Left colon (tissue), 2 donors: ENCODE measurements at regions of chr14 and their contacts with region 1.

Region 1: DNA sequence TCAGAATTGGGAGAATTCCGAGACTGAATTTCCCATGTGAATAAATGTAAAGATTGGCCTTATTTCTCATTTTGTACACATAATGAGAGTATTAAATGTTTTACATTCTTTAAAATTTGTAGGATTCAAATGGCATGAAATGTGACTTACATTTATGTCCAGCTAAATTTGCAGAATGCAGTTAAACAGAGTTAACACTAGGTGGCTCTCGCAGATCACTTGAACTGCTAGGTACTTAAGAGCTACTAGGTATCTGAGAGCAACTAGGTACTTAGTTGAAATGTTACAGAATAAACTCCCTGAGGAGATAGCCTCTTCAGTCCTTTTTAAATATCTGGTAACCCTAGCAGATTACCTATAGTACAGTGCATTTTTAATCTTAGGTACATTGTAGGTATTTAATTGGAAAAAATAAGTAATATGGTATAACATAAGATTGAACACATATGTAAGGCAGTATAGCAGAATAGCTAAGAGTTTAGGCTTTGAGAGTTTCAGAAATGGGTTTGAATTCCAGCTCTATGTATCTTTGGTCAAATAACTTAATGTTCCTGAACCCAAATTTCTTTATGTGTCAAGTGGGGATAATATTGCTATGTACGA is 73.8 kb downstream of the KIAA0586 start:
- DNase-seq: no peak
- ATAC-seq: peak; percentile 71

Region 2: GRCh38 chr14:58637391-58638230 is 136.3 kb after region 1 on chr14 and contains the start of gene DACT1:
- intact Hi-C with region 1: loop called in 1 of 2 experiments (anchors 10 kb)
- DNase-seq: peak; percentile 47 to 55
- ATAC-seq: peak; percentile 66
- total RNA-seq, gene DACT1: 1.3 to 3.8 TPM

Region 3: DNA sequence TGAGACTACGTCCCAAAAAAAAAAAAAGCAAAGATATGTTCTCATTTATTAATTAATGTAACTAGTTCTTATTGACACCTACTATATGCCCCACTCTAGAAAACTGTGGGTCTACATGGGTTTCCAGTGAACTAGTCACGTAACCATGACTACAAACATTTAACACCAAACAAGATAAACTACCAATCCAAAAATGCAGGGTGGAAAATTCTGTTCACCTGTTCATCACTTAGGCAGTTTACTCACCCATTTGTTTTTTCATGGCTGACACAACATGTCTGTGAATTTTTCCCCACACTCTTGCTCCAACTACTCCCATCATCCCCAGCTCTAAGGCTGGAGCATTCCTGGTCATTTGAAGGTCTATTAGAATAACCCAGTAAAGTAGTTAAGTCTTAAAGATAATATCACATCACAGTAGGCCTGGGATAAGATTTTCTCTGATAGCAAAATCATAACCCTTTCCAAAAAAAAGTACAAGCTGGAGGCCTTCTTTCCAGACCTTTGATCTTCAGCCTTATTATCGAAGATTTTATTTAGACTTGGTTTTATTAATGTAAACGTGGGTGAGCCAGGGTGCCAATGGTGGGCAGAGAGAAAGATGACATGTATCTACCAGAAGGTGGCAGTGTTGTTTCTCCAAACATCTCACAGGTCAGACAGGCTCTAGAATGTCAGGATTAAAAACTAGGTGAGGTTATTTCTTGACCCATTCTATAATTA is 625.6 kb after region 1 on chr14:
- intact Hi-C with region 1: loop called in 1 of 2 experiments (anchors 10 kb)
- DNase-seq: no peak
- ATAC-seq: peak; percentile 81